ENCODE measurements at regions of chr4 and their contacts with region 1.

Region 1: GRCh38 chr4:147866532-147867271 is 134.8 kb downstream of the ARHGAP10 start:
- DNase-seq: peak; percentile 84
- H3K4me3 Mint-ChIP-seq: no peak overlapping the region
- H3K27ac Mint-ChIP-seq: no peak overlapping the region
- H3K4me1 Mint-ChIP-seq: no peaks in the 10 kb centered on the region
- H3K27me3 Mint-ChIP-seq: no peaks in the 10 kb centered on the region
- CTCF ChIP-seq: peak; percentile 79

Region 2: GRCh38 chr4:147518846-147519767 is 347.6 kb before region 1 on chr4:
- CTCF ChIA-PET with region 1: interaction called, 6 read pairs
- intact Hi-C with region 1: loop called (anchors 1 kb)
- DNase-seq: peak; percentile 54
- H3K4me3 Mint-ChIP-seq: no peak overlapping the region
- H3K27ac Mint-ChIP-seq: no peak overlapping the region
- H3K4me1 Mint-ChIP-seq: no peaks in the 10 kb centered on the region
- H3K27me3 Mint-ChIP-seq: no peaks in the 10 kb centered on the region
- CTCF ChIP-seq: peak; percentile 49

Region 3: GRCh38 chr4:147617173-147617840 is 249.4 kb before region 1 on chr4 and contains the start of gene TMEM184C:
- CTCF ChIA-PET with region 1: interaction called, 16 read pairs
- intact Hi-C with region 1: no loop called
- DNase-seq: peak; percentile 96
- H3K4me3 Mint-ChIP-seq: peak within 1 kb of the TSS; percentile 87
- H3K27ac Mint-ChIP-seq: peak within 1 kb of the TSS; percentile 83
- H3K4me1 Mint-ChIP-seq: peaks cover 20% of the 10 kb centered on the region
- H3K27me3 Mint-ChIP-seq: no peaks in the 10 kb centered on the region
- CTCF ChIP-seq: no peak
- total RNA-seq, gene TMEM184C: 23.3 and 30.1 TPM in 2 replicates

Region 4: GRCh38 chr4:147693218-147693617 is 173.5 kb before region 1 on chr4:
- CTCF ChIA-PET with region 1: interaction called, 7 read pairs
- intact Hi-C with region 1: loop called (anchors 5 kb)
- DNase-seq: no peak
- H3K4me3 Mint-ChIP-seq: no peak overlapping the region
- H3K27ac Mint-ChIP-seq: peak overlapping the region; percentile 74
- H3K4me1 Mint-ChIP-seq: peaks cover 35% of the 10 kb centered on the region
- H3K27me3 Mint-ChIP-seq: no peaks in the 10 kb centered on the region
- CTCF ChIP-seq: no peak

Region 5: DNA sequence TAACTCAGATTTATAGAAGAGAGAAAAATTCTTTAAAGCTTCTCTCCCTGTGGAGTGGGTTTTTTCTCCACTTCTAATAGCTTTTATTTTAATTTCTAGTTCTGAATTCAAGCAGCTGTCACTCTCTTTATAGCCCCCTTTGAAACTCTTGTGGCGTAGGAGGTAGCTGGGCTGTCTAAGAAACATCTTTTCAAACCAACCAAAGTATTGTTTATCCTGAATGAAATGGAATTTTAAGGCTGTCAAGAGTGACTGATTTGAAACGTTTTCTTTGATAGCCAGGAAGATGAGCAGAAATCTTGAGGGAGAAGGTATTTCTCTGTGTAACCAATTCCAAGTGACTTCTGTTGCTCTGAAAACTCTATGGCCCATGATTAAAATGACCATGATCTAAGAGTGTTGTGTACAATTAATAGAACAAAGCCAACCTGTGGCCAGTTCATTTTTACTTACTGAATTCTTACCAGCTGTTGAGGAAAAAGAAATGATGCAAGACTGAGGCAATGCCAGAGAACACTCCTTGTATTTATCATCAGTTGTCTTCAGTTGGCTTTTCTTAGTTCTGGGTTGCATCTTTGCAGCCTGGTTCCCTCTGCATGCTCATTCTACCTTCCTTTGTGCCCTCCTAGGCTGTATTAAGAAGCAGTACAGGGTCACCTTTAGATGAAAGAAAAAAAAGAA is 163.6 kb after region 1 on chr4:
- CTCF ChIA-PET with region 1: no interaction called
- intact Hi-C with region 1: no loop called
- DNase-seq: no peak
- H3K4me3 Mint-ChIP-seq: no peak overlapping the region
- H3K27ac Mint-ChIP-seq: no peak overlapping the region
- H3K4me1 Mint-ChIP-seq: no peaks in the 10 kb centered on the region
- H3K27me3 Mint-ChIP-seq: no peaks in the 10 kb centered on the region
- CTCF ChIP-seq: no peak